ENCODE measurements at regions of chr5 and their contacts with region 1.

Region 1: DNA sequence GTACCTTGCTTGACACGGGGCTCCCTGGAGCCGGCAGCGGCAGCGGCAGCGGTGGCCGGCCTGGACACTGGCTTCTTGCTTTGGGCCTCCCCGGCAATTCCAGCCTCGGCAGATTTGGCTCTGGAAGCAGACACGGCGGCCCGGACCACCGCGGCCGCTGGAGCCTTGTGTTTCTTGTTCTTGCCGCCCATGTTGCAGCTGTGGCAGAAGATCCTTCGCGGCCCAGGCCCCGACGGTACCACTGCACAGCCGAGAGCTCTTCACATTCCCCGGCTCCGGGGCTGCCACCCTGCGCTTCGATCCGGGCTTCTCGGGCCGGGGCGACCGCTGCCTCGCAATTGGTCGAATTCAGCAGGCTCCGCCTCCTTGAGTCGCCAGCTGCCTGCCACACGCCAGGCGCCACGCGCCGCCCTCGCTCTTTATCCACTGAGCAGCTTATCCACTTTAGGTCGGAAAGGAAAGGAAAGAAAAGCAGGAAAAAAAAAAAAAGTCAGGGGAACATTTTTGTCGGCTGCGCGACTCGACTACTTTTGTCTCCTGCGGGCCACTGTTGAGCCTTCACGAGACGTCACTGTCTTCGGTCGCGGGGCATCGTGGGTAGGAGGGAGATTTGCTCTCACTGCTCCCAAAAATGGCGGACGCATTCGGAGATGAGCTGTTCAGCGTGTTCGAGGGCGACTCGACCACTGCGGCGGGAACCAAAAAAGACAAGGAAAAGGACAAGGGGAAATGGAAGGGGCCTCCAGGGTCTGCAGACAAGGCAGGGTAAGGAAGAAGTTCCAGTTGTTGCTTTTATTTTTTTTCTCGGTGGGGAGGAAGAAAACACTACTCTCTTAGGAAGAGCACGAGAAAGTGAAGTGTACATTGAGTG is at the starts of genes DHX29 and MTREX:
- DNase-seq: peak; percentile 93
- ATAC-seq: peak; percentile 98
- total RNA-seq, gene DHX29: 24.8 TPM
- total RNA-seq, gene MTREX: 69.0 TPM

Region 2: GRCh38 chr5:54624805-54625561 is 682.6 kb before region 1 on chr5:
- intact Hi-C with region 1: no loop called
- DNase-seq: no peak
- ATAC-seq: no peak

Region 3: DNA sequence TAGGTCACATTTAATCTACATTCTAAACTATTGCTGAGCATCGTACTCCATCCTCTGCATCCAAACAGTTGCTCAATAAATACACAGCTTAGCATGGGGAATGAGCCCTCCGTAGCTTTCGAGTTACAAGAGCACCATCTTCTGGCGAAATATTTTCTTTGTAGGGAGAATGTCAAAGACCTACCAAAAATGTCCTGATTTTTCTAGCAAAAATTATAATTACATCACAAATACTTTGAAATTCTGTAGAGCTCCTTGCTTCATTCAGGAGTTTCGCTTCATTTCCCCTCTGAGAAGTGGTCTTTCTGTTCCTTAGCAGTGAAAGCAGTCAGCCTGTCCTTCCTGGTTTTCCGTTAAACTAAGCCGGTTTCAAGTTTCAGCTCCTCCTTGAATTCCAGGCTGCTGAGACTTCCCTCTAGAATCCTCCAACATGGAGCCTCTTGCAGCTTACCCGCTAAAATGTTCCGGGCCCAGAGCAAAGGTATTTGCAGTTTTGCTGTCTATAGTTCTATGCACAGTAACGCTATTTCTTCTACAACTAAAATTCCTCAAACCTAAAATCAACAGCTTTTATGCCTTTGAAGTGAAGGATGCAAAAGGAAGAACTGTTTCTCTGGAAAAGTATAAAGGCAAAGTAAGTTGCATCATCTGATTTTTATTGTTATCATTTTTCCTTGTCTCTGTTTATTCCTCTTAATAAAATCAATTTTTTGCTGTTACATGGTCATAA is 147.7 kb before region 1 on chr5 and contains the start of gene GPX8:
- intact Hi-C with region 1: loop called (anchors 5 kb)
- DNase-seq: no peak
- ATAC-seq: peak; percentile 94
- total RNA-seq, gene GPX8: 34.9 TPM